ENCODE measurements at regions of chr1 and their contacts with region 1.

Region 1: DNA sequence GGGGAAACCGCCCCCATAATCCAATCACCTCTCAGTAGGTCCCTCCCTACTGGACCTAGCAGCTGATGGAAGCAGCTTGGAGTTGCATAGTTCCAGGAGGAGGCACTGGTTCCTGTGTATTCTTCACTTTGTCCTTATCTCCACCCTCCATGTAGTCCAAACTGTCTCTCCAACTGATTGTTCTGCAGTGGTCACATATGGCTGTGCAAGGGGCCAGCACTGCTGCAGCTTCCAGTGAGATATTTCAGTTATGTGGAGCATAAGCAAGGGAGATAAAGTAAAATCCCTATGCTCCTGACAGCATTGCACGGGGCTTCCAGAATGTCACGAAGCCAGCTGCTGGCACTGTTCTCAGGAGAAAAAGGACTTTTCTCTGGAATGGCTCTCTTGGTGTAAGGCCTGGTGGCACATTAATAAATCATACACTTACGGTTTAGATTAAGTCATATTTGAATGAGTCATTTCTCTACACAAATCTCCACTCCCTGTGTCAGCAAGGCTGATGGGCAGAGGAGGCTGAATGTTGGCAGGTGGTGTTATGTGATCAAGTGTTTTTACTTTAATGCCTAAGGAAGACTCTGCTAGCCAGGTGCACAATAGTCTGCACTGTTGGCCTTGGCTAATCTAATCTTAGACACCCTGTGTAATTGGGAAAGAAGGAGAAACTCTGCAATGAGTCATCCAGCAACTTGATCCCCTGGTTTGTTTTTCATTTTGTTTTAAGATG is 93.4 kb downstream of the KCNK1 start:
- DNase-seq: peak; percentile 99
- H3K4me3 Mint-ChIP-seq: no peak overlapping the region
- H3K27ac Mint-ChIP-seq: peak overlapping the region; percentile 87
- H3K4me1 Mint-ChIP-seq: peaks cover 46% of the 10 kb centered on the region
- H3K27me3 Mint-ChIP-seq: no peaks in the 10 kb centered on the region
- CTCF ChIP-seq: no peak

Region 2: GRCh38 chr1:233543340-233544255 is 163.7 kb before region 1 on chr1:
- CTCF ChIA-PET with region 1: no interaction called
- POLR2A ChIA-PET with region 1: interaction called, 6 read pairs
- intact Hi-C with region 1: loop called (anchors 2 kb)
- DNase-seq: peak; percentile 100
- H3K4me3 Mint-ChIP-seq: no peak overlapping the region
- H3K27ac Mint-ChIP-seq: peak overlapping the region; percentile 72
- H3K4me1 Mint-ChIP-seq: peaks cover 20% of the 10 kb centered on the region
- H3K27me3 Mint-ChIP-seq: no peaks in the 10 kb centered on the region
- CTCF ChIP-seq: no peak

Region 3: DNA sequence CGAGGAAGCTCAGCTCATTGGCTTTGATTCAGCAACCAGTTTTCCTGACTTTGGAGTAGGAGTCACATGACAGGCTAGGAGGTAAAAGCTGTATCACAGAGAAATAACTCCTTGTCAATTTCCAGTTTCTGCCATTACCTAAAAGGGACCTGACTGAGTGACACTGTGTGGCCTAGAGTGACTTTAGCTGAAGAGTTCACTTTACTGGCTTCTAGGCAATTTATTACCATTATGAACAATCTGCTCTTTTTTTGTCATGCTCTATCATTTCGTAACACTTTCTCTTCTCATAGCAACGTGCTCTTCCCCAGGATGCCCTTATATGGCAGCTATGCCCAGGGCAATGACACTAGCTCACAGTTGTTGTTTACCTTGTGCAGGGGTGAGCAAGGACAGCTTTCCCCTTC is 13.8 kb after region 1 on chr1:
- CTCF ChIA-PET with region 1: interaction called, 11 read pairs
- POLR2A ChIA-PET with region 1: interaction called, 45 read pairs
- intact Hi-C with region 1: loop called (anchors 1 kb)
- DNase-seq: peak; percentile 84
- H3K4me3 Mint-ChIP-seq: no peak overlapping the region
- H3K27ac Mint-ChIP-seq: peak overlapping the region; percentile 22
- H3K4me1 Mint-ChIP-seq: peaks cover 32% of the 10 kb centered on the region
- H3K27me3 Mint-ChIP-seq: no peaks in the 10 kb centered on the region
- CTCF ChIP-seq: no peak

Region 4: GRCh38 chr1:234065794-234066447 is 358.6 kb after region 1 on chr1:
- CTCF ChIA-PET with region 1: no interaction called
- POLR2A ChIA-PET with region 1: interaction called, 3 read pairs
- intact Hi-C with region 1: loop called (anchors 2 kb)
- DNase-seq: peak; percentile 89
- H3K4me3 Mint-ChIP-seq: no peak overlapping the region
- H3K27ac Mint-ChIP-seq: no peak overlapping the region
- H3K4me1 Mint-ChIP-seq: peaks cover 5% of the 10 kb centered on the region
- H3K27me3 Mint-ChIP-seq: no peaks in the 10 kb centered on the region
- CTCF ChIP-seq: peak; percentile 98

Region 5: DNA sequence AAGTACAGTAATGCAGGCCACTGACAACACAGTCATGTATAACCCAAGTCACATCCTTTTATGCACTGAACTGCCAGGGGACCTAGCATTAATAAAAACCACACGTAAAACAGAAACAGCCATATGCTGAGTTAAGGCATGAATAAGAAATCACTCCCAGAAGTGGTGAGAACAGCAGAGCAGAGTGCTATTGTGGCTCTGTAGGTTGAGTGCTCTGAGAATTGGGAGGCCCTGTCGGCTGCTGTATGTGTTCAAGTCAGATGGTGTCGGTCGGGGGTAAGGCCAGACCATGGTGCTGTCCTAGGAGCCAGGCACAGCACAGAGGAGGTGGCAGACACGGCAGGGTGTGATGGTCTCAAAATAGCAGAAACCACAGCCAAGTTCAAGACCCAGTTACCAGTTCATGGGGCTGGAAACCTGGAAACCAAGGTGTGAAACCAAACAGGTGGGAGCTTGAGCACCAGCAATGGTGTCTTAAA is 539.4 kb after region 1 on chr1:
- CTCF ChIA-PET with region 1: no interaction called
- POLR2A ChIA-PET with region 1: no interaction called
- intact Hi-C with region 1: no loop called
- DNase-seq: no peak
- H3K4me3 Mint-ChIP-seq: no peak overlapping the region
- H3K27ac Mint-ChIP-seq: no peak overlapping the region
- H3K4me1 Mint-ChIP-seq: no peaks in the 10 kb centered on the region
- H3K27me3 Mint-ChIP-seq: no peaks in the 10 kb centered on the region
- CTCF ChIP-seq: no peak